Ovary (tissue), 10 donors: ENCODE measurements at regions of chr12 and their contacts with region 1.

Region 1: GRCh38 chr12:949453-950191 is at the start of gene RAD52:
- DNase-seq: peak; percentile 97 to 99 (median 98)
- H3K4me3 ChIP-seq: peak within 1 kb of the TSS; percentile 75
- H3K27ac ChIP-seq: peak within 1 kb of the TSS; percentile 69 to 88
- H3K4me1 ChIP-seq: peaks cover 10% of the 10 kb centered on the region
- H3K27me3 ChIP-seq: no peaks in the 10 kb centered on the region
- CTCF ChIP-seq: peak; percentile 99
- EP300 ChIP-seq: no peak
- POLR2A ChIP-seq: peak; percentile 71
- total RNA-seq, gene RAD52: 11.4 to 20.2 (median 13.0) TPM

Region 2: GRCh38 chr12:563250-563781 is 386.3 kb before region 1 on chr12:
- intact Hi-C with region 1: loop called in 2 of 4 experiments (anchors 2 kb)
- DNase-seq: no peak
- H3K4me3 ChIP-seq: no peak overlapping the region
- H3K27ac ChIP-seq: no peak overlapping the region
- H3K4me1 ChIP-seq: no peaks in the 10 kb centered on the region
- H3K27me3 ChIP-seq: no peaks in the 10 kb centered on the region
- CTCF ChIP-seq: no peak
- EP300 ChIP-seq: no peak
- POLR2A ChIP-seq: no peak

Region 3: DNA sequence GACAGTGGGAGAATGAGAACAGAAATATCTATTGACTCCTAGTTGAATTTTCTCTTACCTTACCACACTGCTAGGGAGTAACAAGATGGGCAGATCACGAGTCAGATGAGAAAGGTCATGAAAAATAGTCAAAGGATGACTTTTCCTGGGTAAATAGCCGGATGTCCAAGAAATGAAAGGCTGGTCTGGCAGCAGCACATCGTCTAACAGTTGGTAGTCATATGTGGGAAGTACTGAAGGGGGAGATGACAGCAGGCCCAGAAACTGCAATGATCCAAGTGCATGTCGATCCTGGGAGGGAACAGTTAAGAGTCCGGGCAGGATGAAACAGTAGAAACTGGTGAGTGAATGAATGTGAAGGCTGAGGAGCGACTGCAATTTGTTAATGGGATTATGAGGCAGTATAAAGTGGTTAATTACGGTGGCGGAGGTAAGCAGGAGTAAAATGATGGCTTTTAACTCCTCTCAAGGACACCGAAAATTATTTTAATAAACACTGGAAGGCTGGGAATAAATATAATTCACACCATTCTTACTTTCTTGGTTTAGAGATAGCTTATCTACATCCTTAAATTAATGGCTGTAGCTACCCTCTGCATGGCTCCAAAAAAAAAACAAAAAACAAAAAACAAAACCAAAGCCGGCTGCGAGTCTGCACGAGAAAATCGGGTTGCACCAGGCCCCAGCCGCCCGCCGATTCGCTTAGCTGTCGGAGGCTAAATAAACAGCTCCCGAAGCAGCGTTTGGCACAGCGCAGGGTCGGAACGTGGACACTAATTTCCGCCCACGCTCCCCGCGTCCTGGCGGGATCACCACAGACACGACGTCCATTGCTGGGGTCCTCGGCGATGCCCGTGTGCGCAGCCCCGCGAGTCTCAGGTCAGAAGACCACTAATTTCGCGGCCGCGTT is 40.4 kb after region 1 on chr12:
- intact Hi-C with region 1: loop called in 1 of 4 experiments (anchors 5 kb)
- DNase-seq: peak; percentile 68 to 85 (median 78)
- H3K4me3 ChIP-seq: peak overlapping the region; percentile 57
- H3K27ac ChIP-seq: peak overlapping the region; percentile 88 to 96
- H3K4me1 ChIP-seq: peaks cover 9% of the 10 kb centered on the region
- H3K27me3 ChIP-seq: no peaks in the 10 kb centered on the region
- CTCF ChIP-seq: no peak
- EP300 ChIP-seq: no peak
- POLR2A ChIP-seq: no peak